ENCODE measurements at regions of chr6 and their contacts with region 1.

Region 1: DNA sequence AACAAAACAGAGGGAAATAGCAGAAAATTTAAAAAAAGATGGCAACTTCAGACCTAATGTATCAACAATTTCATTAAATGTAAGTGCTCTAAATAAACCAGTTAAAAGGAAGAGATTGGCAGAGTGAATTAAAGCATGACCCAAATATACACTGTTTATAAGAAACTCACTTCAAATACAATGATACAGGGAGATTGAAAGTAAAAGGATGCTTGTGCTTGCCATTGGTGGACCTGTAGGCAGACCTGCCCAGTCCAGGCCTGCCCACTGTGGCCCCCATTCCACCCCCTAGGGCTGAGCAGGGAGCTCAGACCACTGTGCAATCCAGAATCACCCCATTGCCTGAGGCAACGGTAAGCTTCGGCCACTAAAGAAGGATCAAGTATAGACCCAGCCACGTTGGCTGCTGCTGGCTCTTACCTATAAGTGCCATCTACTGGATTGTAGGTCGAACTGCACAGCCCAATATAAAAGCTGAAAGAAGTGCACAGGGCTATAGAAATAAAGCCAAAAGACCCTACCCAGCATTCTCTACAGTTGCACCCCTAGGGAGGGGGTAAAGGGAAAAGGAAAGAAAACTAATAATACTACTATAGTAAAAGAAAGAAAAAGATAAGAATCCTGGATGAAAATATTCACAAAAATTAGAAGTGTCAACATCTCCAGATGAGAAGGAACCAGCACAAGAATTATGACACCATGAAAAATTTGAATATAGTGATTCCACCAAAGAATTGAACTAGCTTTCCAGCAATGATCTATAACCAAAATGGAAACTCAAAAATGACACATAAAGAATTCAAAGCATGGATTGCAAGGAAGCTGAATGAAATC is 36.1 kb downstream of the PSMB1 start:
- DNase-seq: peak in 12 of 14 experiments; percentile 3 to 68 (median 18)
- ATAC-seq: peak; percentile 89
- H3K4me3 ChIP-seq: no peak overlapping the region
- H3K4me3 Mint-ChIP-seq: peak overlapping the region; percentile 42
- H3K27ac ChIP-seq: no peak overlapping the region
- H3K27ac Mint-ChIP-seq: no peak overlapping the region
- H3K4me1 ChIP-seq: peaks cover 3% of the 10 kb centered on the region
- H3K4me1 Mint-ChIP-seq: no peaks in the 10 kb centered on the region
- H3K27me3 ChIP-seq: peaks cover 2 to 14% of the 10 kb centered on the region in 2 experiments
- H3K27me3 Mint-ChIP-seq: peaks cover 42% of the 10 kb centered on the region
- CTCF ChIP-seq: peak; percentile 85

Region 2: GRCh38 chr6:168895102-168895812 is 1621.7 kb before region 1 on chr6:
- CTCF ChIA-PET with region 1: no interaction called
- POLR2A ChIA-PET with region 1: no interaction called
- intact Hi-C with region 1: loop called (anchors 1 to 5 kb)
- DNase-seq: peak; percentile 62 to 87 (median 74)
- ATAC-seq: peak; percentile 96
- H3K4me3 ChIP-seq: peak overlapping the region; percentile 28
- H3K4me3 Mint-ChIP-seq: peak overlapping the region; percentile 4
- H3K27ac ChIP-seq: no peak overlapping the region
- H3K27ac Mint-ChIP-seq: no peak overlapping the region
- H3K4me1 ChIP-seq: peaks cover 8% of the 10 kb centered on the region
- H3K4me1 Mint-ChIP-seq: peaks cover 15% of the 10 kb centered on the region
- H3K27me3 ChIP-seq: no peaks in the 10 kb centered on the region
- H3K27me3 Mint-ChIP-seq: no peaks in the 10 kb centered on the region
- CTCF ChIP-seq: peak; percentile 83

Region 3: GRCh38 chr6:168956884-168957730 is 1559.9 kb before region 1 on chr6:
- CTCF ChIA-PET with region 1: no interaction called
- POLR2A ChIA-PET with region 1: no interaction called
- intact Hi-C with region 1: loop called in 1 of 2 experiments (anchors 2 kb)
- DNase-seq: peak in 13 of 14 experiments; percentile 10 to 66 (median 28)
- ATAC-seq: peak; percentile 39
- H3K4me3 ChIP-seq: no peak overlapping the region
- H3K4me3 Mint-ChIP-seq: no peak overlapping the region
- H3K27ac ChIP-seq: no peak overlapping the region
- H3K27ac Mint-ChIP-seq: no peak overlapping the region
- H3K4me1 ChIP-seq: no peaks in the 10 kb centered on the region
- H3K4me1 Mint-ChIP-seq: no peaks in the 10 kb centered on the region
- H3K27me3 ChIP-seq: peaks cover 0 to 13% of the 10 kb centered on the region in 2 experiments
- H3K27me3 Mint-ChIP-seq: peaks cover 44% of the 10 kb centered on the region
- CTCF ChIP-seq: peak; percentile 61

Region 4: DNA sequence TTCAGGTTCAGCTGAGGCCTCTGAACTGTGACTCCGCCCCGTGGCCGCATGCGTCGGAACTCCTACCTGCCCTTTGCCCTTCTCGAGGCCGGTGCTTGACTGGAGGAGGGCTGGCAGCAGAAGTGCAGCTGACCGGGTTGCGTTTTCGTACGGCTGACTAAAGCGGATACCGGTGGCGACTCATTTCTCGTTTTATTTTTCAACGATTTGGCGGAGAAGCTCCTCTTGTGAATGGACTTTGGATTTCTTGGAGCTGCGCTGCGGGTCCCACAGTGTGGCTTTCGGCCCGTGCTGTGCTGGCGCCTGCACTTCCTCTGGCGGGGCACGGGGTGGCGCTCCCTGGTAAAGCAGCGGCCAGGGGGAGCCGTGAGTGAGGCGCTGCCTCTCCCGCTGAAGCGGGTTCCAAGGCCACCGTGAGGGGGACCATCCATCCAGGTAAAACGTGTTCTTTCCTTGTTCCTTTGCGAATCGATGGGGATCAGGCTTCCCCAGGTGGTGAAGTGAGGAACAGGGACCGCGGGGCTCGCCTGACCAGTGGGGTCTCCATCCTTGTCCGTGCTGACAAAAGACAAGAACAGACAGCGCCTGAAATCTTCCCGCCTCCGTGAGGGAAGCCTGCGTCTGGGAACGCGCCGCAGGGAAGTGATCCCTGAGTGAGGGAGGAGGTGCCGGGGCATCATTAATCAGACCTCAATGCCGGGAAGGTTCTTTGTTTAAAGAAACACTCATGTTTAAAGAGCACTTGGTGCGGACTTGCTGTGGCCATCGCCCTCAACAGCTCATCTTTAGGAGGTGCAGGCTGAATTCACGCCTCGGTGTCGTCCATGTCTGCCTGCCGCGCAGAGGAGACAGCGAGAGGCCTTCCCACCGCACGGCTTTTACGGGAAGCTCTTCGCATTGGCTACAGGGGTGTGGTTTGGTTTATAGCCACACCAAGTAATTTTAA is 726.7 kb before region 1 on chr6:
- CTCF ChIA-PET with region 1: interaction called, 9 read pairs
- POLR2A ChIA-PET with region 1: interaction called, 4 read pairs
- intact Hi-C with region 1: loop called (anchors 1 kb)
- DNase-seq: peak; percentile 46 to 83 (median 67)
- ATAC-seq: peak; percentile 97
- H3K4me3 ChIP-seq: peak overlapping the region; percentile 70
- H3K4me3 Mint-ChIP-seq: peak overlapping the region; percentile 89
- H3K27ac ChIP-seq: no peak overlapping the region
- H3K27ac Mint-ChIP-seq: no peak overlapping the region
- H3K4me1 ChIP-seq: peaks cover 16% of the 10 kb centered on the region
- H3K4me1 Mint-ChIP-seq: peaks cover 18% of the 10 kb centered on the region
- H3K27me3 ChIP-seq: no peaks in the 10 kb centered on the region
- H3K27me3 Mint-ChIP-seq: peaks cover 39% of the 10 kb centered on the region
- CTCF ChIP-seq: peak; percentile 95

Region 5: GRCh38 chr6:169831450-169832246 is 685.4 kb before region 1 on chr6:
- CTCF ChIA-PET with region 1: interaction called, 12 read pairs
- POLR2A ChIA-PET with region 1: no interaction called
- intact Hi-C with region 1: loop called (anchors 1 kb)
- DNase-seq: peak; percentile 42 to 81 (median 64)
- ATAC-seq: peak; percentile 48
- H3K4me3 ChIP-seq: no peak overlapping the region
- H3K4me3 Mint-ChIP-seq: no peak overlapping the region
- H3K27ac ChIP-seq: no peak overlapping the region
- H3K27ac Mint-ChIP-seq: no peak overlapping the region
- H3K4me1 ChIP-seq: peaks cover 6% of the 10 kb centered on the region
- H3K4me1 Mint-ChIP-seq: no peaks in the 10 kb centered on the region
- H3K27me3 ChIP-seq: peaks cover 13 to 18% of the 10 kb centered on the region in 2 experiments
- H3K27me3 Mint-ChIP-seq: peaks cover 61% of the 10 kb centered on the region
- CTCF ChIP-seq: peak; percentile 82

Region 6: GRCh38 chr6:169950558-169950957 is 566.4 kb before region 1 on chr6:
- CTCF ChIA-PET with region 1: no interaction called
- POLR2A ChIA-PET with region 1: no interaction called
- intact Hi-C with region 1: loop called (anchors 1 to 2 kb)
- DNase-seq: peak in 9 of 14 experiments; percentile 10 to 66 (median 36)
- ATAC-seq: no peak
- H3K4me3 ChIP-seq: no peak overlapping the region
- H3K4me3 Mint-ChIP-seq: no peak overlapping the region
- H3K27ac ChIP-seq: no peak overlapping the region
- H3K27ac Mint-ChIP-seq: no peak overlapping the region
- H3K4me1 ChIP-seq: no peaks in the 10 kb centered on the region
- H3K4me1 Mint-ChIP-seq: no peaks in the 10 kb centered on the region
- H3K27me3 ChIP-seq: no peaks in the 10 kb centered on the region
- H3K27me3 Mint-ChIP-seq: no peaks in the 10 kb centered on the region
- CTCF ChIP-seq: peak; percentile 52

Measured in CD4-positive, alpha-beta T cell (primary cell).